Ascending aorta (tissue), 2 donors: ENCODE measurements at regions of chr1 and their contacts with region 1.

Region 1: GRCh38 chr1:92784639-92785500 is at the start of gene EVI5:
- DNase-seq: peak; percentile 82 to 96
- H3K4me3 ChIP-seq: peak within 1 kb of the TSS; percentile 74 to 100
- H3K27ac ChIP-seq: peak within 1 kb of the TSS; percentile 90 to 100
- H3K4me1 ChIP-seq: peaks cover 0 to 13% of the 10 kb centered on the region in 2 donors
- H3K27me3 ChIP-seq: no peaks in the 10 kb centered on the region
- CTCF ChIP-seq: no peak
- total RNA-seq, gene EVI5: 19.8 TPM

Region 2: DNA sequence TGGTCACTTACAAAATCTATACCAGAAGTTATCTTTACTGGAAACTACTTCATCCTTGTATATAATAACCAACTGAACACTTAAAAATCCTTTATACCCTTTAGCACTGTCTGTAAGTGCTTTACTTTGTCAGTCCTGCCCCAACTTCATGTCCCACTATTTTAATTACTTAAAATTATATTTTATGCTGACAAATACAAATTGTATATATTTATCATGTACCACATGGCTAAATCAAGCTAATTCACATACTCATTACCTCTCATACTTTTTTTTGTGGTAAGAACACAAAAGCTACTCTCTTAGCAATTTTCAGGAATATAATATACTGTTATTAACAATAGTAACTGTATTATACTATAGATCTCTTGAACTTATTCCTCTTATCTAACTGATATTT is 63.0 kb before region 1 on chr1:
- intact Hi-C with region 1: no loop called
- DNase-seq: no peak
- H3K4me3 ChIP-seq: no peak overlapping the region
- H3K27ac ChIP-seq: no peak overlapping the region
- H3K4me1 ChIP-seq: no peaks in the 10 kb centered on the region
- H3K27me3 ChIP-seq: no peaks in the 10 kb centered on the region
- CTCF ChIP-seq: no peak

Region 3: GRCh38 chr1:92804721-92805169 is 19.9 kb after region 1 on chr1:
- intact Hi-C with region 1: loop called (anchors 1 kb)
- DNase-seq: peak; percentile 17 to 93
- H3K4me3 ChIP-seq: no peak overlapping the region
- H3K27ac ChIP-seq: peak overlapping the region; percentile 50 to 76
- H3K4me1 ChIP-seq: peaks cover 0 to 9% of the 10 kb centered on the region in 2 donors
- H3K27me3 ChIP-seq: no peaks in the 10 kb centered on the region
- CTCF ChIP-seq: no peak

Region 4: GRCh38 chr1:92831762-92832536 is 47.1 kb after region 1 on chr1 and contains the start of gene RPL5:
- intact Hi-C with region 1: loop called (anchors 1 kb)
- DNase-seq: peak; percentile 81 to 98
- H3K4me3 ChIP-seq: peak within 1 kb of the TSS; percentile 80
- H3K27ac ChIP-seq: peak within 1 kb of the TSS; percentile 85 to 90
- H3K4me1 ChIP-seq: peaks cover 12 to 16% of the 10 kb centered on the region in 2 donors
- H3K27me3 ChIP-seq: no peaks in the 10 kb centered on the region
- CTCF ChIP-seq: peak; percentile 74 to 95 (median 92)
- total RNA-seq, gene RPL5: 617 TPM

Region 5: GRCh38 chr1:93129507-93130099 is 344.7 kb after region 1 on chr1:
- intact Hi-C with region 1: no loop called
- DNase-seq: no peak
- H3K4me3 ChIP-seq: no peak overlapping the region
- H3K27ac ChIP-seq: no peak overlapping the region
- H3K4me1 ChIP-seq: no peaks in the 10 kb centered on the region
- H3K27me3 ChIP-seq: no peaks in the 10 kb centered on the region
- CTCF ChIP-seq: no peak